Uterus (tissue), 4 donors: ENCODE measurements at regions of chr6 and their contacts with region 1.

Region 1: DNA sequence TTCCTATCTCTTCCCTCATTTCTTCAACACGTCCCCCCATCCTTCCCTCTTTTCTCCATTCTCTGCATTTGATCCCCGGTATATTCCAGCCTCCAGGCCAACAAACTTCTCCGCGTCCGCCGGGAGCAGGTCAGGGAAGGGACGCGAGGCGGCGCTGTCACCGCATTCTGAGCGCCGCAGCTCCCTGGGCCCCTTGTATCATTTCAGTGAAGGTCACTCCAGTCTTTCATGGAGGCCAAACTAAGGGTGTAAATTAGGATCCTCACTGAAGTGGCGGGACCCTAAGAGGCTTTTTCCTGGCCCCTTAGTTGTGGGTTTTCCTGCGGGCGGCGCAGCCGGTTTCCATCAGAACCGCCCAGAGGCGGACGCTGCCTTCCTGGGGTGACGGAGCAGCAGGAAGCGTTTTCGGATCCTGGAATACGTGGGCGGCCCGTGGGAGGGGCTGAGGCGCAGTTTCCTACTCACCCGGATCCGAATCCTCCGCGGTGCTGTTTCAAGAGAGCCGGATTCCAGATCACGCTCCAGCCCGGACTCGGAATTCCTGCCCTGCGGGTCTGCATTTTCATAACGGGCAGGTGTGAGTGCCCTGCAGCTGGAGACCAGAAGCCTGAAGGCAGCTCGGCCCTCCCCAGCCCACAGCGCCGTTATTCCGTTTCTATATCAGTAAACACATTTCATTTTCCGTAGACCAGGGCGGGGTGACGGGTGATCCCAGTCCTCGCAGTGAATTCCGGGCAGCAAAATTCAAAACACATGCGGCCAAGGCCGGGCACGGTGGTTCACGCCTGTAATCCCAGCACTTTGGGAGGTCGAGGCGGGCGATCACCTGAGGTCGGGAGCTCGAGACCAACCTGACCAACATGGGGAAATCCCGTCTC is 3.6 kb upstream of the MICA start:
- DNase-seq: peak; percentile 92 to 95
- H3K4me3 ChIP-seq: peak overlapping the region; percentile 74 to 91
- H3K27ac ChIP-seq: peak overlapping the region; percentile 96 to 99
- H3K4me1 ChIP-seq: peaks cover 6 to 15% of the 10 kb centered on the region in 2 donors
- H3K27me3 ChIP-seq: no peaks in the 10 kb centered on the region
- CTCF ChIP-seq: peak; percentile 87 to 92 (median 90)
- POLR2A ChIP-seq: peak; percentile 57 to 66

Region 2: GRCh38 chr6:31441365-31442267 is 41.8 kb after region 1 on chr6:
- intact Hi-C with region 1: loop called (anchors 2 kb)
- DNase-seq: peak; percentile 83 to 84
- H3K4me3 ChIP-seq: no peak overlapping the region
- H3K27ac ChIP-seq: no peak overlapping the region
- H3K4me1 ChIP-seq: peaks cover 0 to 8% of the 10 kb centered on the region in 2 donors
- H3K27me3 ChIP-seq: no peaks in the 10 kb centered on the region
- CTCF ChIP-seq: peak; percentile 85 to 89 (median 88)
- POLR2A ChIP-seq: no peak

Region 3: DNA sequence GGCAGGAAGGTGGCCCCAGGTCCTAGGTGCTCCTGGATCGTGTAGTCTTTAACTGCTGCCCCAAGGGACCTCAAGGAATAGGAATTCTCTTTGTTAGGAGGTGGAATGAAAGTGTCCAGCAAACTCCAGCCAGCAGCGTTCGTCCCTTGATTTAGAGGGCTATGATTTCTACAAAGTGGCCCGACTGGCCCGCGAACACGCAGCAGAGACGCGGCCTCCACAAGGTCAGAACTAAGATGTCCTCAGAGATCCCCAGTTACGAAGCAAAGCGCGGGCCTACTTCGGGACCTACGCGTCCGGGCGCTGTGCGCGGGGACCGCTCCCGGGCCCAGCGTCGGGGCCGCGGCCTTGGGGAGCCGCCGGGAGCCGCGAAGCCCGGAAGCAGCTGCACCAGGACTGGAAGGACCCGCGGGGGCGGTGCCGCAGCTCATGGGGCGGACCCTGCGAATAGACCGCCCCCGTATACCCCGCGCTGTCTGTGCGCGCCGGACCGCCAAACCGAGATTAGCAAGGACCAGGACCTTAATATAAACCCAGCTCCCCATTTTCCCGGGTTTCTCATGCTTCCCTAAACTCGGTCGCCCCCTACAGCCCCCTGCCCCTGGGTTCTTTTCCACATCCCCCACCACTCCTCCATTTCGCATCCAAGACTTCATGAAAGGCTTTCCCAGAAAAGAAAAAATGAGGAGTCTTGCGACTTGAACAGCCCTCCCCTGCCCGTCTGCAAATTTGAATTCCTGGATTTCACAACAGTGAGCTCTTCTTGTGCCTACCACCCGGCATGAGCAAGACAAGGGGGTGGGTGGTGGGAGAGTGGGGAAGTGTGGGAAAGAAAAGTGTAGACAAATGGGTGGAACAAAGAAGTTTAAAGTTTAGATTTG is 260.8 kb after region 1 on chr6 and contains the start of gene C6orf47:
- intact Hi-C with region 1: no loop called
- DNase-seq: peak; percentile 85 to 89
- H3K4me3 ChIP-seq: peak within 1 kb of the TSS; percentile 58 to 71
- H3K27ac ChIP-seq: peak within 1 kb of the TSS; percentile 81 to 91
- H3K4me1 ChIP-seq: peaks cover 11 to 19% of the 10 kb centered on the region in 2 donors
- H3K27me3 ChIP-seq: no peaks in the 10 kb centered on the region
- CTCF ChIP-seq: no peak
- POLR2A ChIP-seq: peak; percentile 68 to 85
- total RNA-seq, gene C6orf47: 6.2 to 31.9 (median 24.6) TPM